ENCODE measurements at regions of chr3 and their contacts with region 1.

Region 1: DNA sequence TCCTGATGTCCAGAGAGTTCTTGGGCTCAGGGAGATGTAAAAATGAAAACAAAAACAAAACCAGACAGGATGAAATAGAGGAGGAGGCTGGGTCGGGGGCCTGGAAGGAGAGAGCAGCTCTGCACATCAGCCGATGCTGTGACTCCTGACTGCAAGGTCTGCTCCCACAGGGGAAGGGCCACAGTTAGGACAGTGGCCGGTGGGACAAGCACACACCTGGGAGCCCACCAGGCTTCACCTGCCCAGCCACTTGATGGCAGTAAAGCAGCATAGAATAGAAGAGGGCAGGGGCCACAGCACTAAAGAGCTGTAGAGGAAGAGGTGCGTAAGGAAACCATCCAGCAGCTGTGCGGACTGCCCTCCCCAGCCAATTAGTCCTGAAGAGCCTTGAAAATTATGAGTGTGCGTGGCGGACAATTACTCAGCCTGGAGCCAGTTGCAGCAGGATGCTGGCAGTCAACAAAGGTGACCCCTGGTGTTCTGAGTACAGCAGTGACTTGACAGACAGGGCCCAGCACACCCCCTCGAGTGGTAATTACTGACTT is 29.8 kb downstream of the ALS2CL start:
- DNase-seq: peak; percentile 46
- H3K4me3 ChIP-seq: no peak overlapping the region
- H3K27ac ChIP-seq: no peak overlapping the region
- H3K4me1 ChIP-seq: no peaks in the 10 kb centered on the region
- H3K27me3 ChIP-seq: no peaks in the 10 kb centered on the region
- CTCF ChIP-seq: peak; percentile 12 to 16
- POLR2A ChIP-seq: no peak

Region 2: GRCh38 chr3:46517016-46517793 is 146.5 kb before region 1 on chr3:
- CTCF ChIA-PET with region 1: no interaction called
- POLR2A ChIA-PET with region 1: no interaction called
- dilution Hi-C with region 1: no loop called
- intact Hi-C with region 1: no loop called
- DNase-seq: peak; percentile 61
- H3K4me3 ChIP-seq: no peak overlapping the region
- H3K27ac ChIP-seq: peak overlapping the region; percentile 84
- H3K4me1 ChIP-seq: peaks cover 37% of the 10 kb centered on the region
- H3K27me3 ChIP-seq: no peaks in the 10 kb centered on the region
- CTCF ChIP-seq: no peak
- POLR2A ChIP-seq: no peak

Region 3: GRCh38 chr3:46695177-46695961 is 31.7 kb after region 1 on chr3:
- CTCF ChIA-PET with region 1: interaction called, 18 read pairs
- POLR2A ChIA-PET with region 1: no interaction called
- dilution Hi-C with region 1: no loop called
- intact Hi-C with region 1: no loop called
- DNase-seq: peak; percentile 86
- H3K4me3 ChIP-seq: no peak overlapping the region
- H3K27ac ChIP-seq: peak overlapping the region; percentile 64
- H3K4me1 ChIP-seq: peaks cover 22% of the 10 kb centered on the region
- H3K27me3 ChIP-seq: no peaks in the 10 kb centered on the region
- CTCF ChIP-seq: peak; percentile 26 to 27
- POLR2A ChIP-seq: peak; percentile 28

Region 4: GRCh38 chr3:47065681-47066080 is 402.0 kb after region 1 on chr3:
- CTCF ChIA-PET with region 1: no interaction called
- POLR2A ChIA-PET with region 1: no interaction called
- dilution Hi-C with region 1: no loop called
- intact Hi-C with region 1: no loop called
- DNase-seq: no peak
- H3K4me3 ChIP-seq: no peak overlapping the region
- H3K27ac ChIP-seq: no peak overlapping the region
- H3K4me1 ChIP-seq: no peaks in the 10 kb centered on the region
- H3K27me3 ChIP-seq: no peaks in the 10 kb centered on the region
- CTCF ChIP-seq: no peak
- POLR2A ChIP-seq: no peak

Measured in endothelial cell of umbilical vein (primary cell).